ENCODE measurements at regions of chr6 and their contacts with region 1.

Region 1: DNA sequence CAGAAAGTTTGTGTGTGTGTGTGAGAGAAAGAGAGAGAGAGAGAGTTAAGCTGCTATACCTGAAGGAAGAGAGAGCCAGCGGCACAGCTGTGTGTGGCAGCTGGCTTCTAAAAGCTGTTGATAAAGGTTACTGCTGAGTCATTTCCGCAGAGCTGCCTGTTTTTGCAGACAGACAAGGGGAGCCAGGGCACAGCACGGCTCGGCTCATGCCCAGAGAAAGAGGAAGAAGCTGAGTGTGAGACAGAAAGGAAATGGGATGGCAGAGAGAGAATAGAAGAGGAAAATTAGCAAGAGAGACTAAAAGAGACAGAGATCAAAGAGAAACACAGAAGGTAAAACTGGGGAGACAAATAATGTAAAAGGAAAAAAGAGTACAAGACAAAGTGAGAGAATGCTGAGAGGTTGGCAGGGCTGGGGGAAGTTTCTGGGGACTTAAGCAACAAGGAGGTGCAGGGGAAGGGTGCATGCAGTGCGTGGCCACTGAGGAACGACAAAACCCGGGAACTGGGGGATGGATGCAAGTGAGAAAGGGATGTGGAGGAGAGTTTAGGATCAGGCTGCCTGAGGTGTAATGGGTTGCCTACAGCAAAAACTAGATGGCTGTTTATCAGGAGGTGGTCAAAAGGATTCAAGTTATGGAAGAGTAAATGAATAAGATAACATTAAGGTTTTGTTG is 22.7 kb downstream of the HLA-A start:
- DNase-seq: peak; percentile 62
- ATAC-seq: peak; percentile 95
- H3K4me3 Mint-ChIP-seq: peak overlapping the region; percentile 89
- H3K27ac Mint-ChIP-seq: peak overlapping the region; percentile 97
- H3K4me1 Mint-ChIP-seq: peaks cover 35% of the 10 kb centered on the region
- H3K27me3 Mint-ChIP-seq: no peaks in the 10 kb centered on the region

Region 2: DNA sequence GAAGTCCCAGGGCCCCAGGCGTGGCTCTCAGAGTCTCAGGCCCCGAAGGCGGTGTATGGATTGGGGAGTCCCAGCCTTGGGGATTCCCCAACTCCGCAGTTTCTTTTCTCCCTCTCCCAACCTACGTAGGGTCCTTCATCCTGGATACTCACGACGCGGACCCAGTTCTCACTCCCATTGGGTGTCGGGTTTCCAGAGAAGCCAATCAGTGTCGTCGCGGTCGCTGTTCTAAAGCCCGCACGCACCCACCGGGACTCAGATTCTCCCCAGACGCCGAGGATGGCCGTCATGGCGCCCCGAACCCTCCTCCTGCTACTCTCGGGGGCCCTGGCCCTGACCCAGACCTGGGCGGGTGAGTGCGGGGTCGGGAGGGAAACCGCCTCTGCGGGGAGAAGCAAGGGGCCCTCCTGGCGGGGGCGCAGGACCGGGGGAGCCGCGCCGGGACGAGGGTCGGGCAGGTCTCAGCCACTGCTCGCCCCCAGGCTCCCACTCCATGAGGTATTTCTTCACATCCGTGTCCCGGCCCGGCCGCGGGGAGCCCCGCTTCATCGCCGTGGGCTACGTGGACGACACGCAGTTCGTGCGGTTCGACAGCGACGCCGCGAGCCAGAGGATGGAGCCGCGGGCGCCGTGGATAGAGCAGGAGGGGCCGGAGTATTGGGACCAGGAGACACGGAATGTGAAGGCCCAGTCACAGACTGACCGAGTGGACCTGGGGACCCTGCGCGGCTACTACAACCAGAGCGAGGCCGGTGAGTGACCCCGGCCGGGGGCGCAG is 22.6 kb before region 1 on chr6 and contains the start of gene HLA-A:
- POLR2A ChIA-PET with region 1: interaction called, 15 read pairs
- DNase-seq: peak; percentile 87
- ATAC-seq: peak; percentile 89
- H3K4me3 Mint-ChIP-seq: peak within 1 kb of the TSS; percentile 97
- H3K27ac Mint-ChIP-seq: peak within 1 kb of the TSS; percentile 100
- H3K4me1 Mint-ChIP-seq: peaks cover 40% of the 10 kb centered on the region
- H3K27me3 Mint-ChIP-seq: peaks cover 3% of the 10 kb centered on the region
- total RNA-seq, gene HLA-A: 2,013 to 2,035 TPM

Region 3: DNA sequence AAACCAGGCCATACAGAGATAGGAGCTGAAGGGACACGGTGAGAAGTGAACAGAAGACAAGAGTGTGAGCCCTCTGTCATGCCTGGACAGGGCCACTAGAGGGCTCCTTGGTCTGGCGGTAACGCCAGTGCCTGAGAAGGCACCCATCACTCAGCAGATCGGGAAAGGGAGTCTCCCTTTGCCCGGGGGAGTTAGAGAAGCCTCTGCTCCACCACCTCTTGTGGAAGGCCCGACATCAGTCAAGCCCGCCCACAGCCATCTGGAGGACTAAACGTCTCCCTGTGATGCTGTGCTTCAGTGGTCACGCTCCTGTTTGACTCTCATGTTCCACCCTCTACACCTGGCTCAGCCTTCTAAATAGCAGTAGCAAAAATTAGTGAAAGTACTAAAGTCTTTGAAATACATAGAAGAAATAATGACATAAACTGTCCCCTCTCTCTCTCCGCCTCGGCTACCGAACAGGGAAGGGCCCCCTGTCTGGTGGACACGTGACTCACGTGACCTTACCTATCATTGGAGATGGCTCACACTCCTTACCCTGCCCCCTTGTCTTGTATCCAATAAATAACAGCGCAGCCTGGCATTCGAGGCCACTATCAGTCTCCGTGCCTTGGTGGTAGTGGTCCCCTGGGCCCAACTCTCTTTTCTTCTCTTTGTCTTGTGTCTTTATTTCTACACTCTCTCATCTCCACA is 446.6 kb after region 1 on chr6:
- POLR2A ChIA-PET with region 1: no interaction called
- DNase-seq: peak; percentile 65
- ATAC-seq: peak; percentile 39
- H3K4me3 Mint-ChIP-seq: no peak overlapping the region
- H3K27ac Mint-ChIP-seq: no peak overlapping the region
- H3K4me1 Mint-ChIP-seq: peaks cover 5% of the 10 kb centered on the region
- H3K27me3 Mint-ChIP-seq: peaks cover 64% of the 10 kb centered on the region

Measured in activated naive CD8-positive, alpha-beta T cell treated with anti-CD3 and anti-CD28 coated beads, Interleukin-2, amount 10 ng/mL, durations not matched to agents 7 days and 5 days (primary cell).